ENCODE measurements at regions of chr6 and their contacts with region 1.

Region 1: GRCh38 chr6:33014841-33015634 is 5.6 kb upstream of the HLA-DOA start:
- DNase-seq: peak; percentile 73
- H3K4me3 ChIP-seq: no peak overlapping the region
- H3K27ac ChIP-seq: no peak overlapping the region
- H3K27me3 ChIP-seq: peaks cover 42% of the 10 kb centered on the region
- CTCF ChIP-seq: peak; percentile 69

Region 2: GRCh38 chr6:32741031-32741960 is 273.7 kb before region 1 on chr6 and contains the start of gene HLA-DQA2:
- CTCF ChIA-PET with region 1: no interaction called
- POLR2A ChIA-PET with region 1: no interaction called
- DNase-seq: no peak
- H3K4me3 ChIP-seq: no peak within 1 kb of the TSS
- H3K27ac ChIP-seq: no peak within 1 kb of the TSS
- H3K27me3 ChIP-seq: no peaks in the 10 kb centered on the region
- CTCF ChIP-seq: no peak
- polyA plus RNA-seq, gene HLA-DQA2: not detected in 2 replicates

Region 3: GRCh38 chr6:33066917-33067521 is 52.0 kb after region 1 on chr6:
- CTCF ChIA-PET with region 1: no interaction called
- POLR2A ChIA-PET with region 1: no interaction called
- DNase-seq: no peak
- H3K4me3 ChIP-seq: no peak overlapping the region
- H3K27ac ChIP-seq: no peak overlapping the region
- H3K27me3 ChIP-seq: peaks cover 5% of the 10 kb centered on the region
- CTCF ChIP-seq: no peak

Region 4: DNA sequence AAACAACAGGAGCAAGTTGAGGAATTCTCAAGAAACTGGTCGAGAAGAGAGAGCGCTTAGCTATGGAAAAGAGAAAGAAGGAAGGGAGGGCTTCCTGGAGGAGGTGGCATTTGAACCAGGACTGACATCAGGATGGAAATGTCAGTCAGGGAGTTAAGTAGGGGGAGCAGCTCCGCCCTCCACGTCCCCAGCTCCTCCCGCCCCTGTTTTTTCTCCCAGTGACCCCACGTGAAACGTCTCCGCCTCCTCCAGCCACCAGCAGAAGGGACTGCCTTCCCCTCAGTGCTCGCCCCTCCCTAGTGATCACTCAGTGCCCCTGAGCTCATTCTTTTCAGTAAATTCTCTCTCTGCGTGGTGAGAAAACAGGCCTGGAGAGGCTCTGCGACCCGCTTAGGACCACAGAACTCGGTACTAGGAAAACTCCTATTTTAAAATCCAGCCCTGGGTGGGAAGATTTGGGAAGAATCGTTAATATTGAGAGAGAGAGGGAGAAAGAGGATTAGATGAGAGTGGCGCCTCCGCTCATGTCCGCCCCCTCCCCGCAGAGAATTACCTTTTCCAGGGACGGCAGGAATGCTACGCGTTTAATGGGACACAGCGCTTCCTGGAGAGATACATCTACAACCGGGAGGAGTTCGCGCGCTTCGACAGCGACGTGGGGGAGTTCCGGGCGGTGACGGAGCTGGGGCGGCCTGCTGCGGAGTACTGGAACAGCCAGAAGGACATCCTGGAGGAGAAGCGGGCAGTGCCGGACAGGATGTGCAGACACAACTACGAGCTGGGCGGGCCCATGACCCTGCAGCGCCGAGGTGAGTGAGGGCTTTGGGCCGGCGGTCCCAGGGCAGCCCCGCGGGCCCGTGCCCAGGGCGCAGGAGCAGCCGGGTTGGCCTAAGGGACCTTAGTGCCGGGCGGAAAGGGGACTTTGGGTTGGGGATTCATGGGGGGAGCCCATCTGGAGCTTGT is 65.4 kb after region 1 on chr6:
- CTCF ChIA-PET with region 1: interaction called, 16 read pairs
- POLR2A ChIA-PET with region 1: no interaction called
- DNase-seq: no peak
- H3K4me3 ChIP-seq: peak overlapping the region; percentile 37
- H3K27ac ChIP-seq: no peak overlapping the region
- H3K27me3 ChIP-seq: peaks cover 38% of the 10 kb centered on the region
- CTCF ChIP-seq: no peak

Region 5: GRCh38 chr6:33126101-33126714 is 111.2 kb after region 1 on chr6:
- CTCF ChIA-PET with region 1: no interaction called
- POLR2A ChIA-PET with region 1: no interaction called
- DNase-seq: no peak
- H3K4me3 ChIP-seq: no peak overlapping the region
- H3K27ac ChIP-seq: no peak overlapping the region
- H3K27me3 ChIP-seq: peaks cover 26% of the 10 kb centered on the region
- CTCF ChIP-seq: peak; percentile 52

Region 6: GRCh38 chr6:33172688-33173534 is 157.9 kb after region 1 on chr6:
- CTCF ChIA-PET with region 1: interaction called, 15 read pairs
- POLR2A ChIA-PET with region 1: no interaction called
- DNase-seq: no peak
- H3K4me3 ChIP-seq: no peak overlapping the region
- H3K27ac ChIP-seq: no peak overlapping the region
- H3K27me3 ChIP-seq: peaks cover 19% of the 10 kb centered on the region
- CTCF ChIP-seq: peak; percentile 78

Measured in AG04450 (cell line).